IMR-90 (cell line): ENCODE measurements at regions of chr6 and their contacts with region 1.

Region 1: GRCh38 chr6:169452117-169452868 is 198.6 kb upstream of the THBS2 start:
- DNase-seq: peak; percentile 97
- ATAC-seq: peak; percentile 94
- H3K4me3 ChIP-seq: peak overlapping the region; percentile 12; the same call in 1 of the 2 replicates
- H3K27ac ChIP-seq: peak overlapping the region; percentile 93
- H3K4me1 ChIP-seq: peaks cover 21% of the 10 kb centered on the region
- H3K27me3 ChIP-seq: no peaks in the 10 kb centered on the region
- CTCF ChIP-seq: no peak
- POLR2A ChIP-seq: no peak
- RAD21 ChIP-seq: no peak; the same call in 1 of the 2 replicates

Region 2: DNA sequence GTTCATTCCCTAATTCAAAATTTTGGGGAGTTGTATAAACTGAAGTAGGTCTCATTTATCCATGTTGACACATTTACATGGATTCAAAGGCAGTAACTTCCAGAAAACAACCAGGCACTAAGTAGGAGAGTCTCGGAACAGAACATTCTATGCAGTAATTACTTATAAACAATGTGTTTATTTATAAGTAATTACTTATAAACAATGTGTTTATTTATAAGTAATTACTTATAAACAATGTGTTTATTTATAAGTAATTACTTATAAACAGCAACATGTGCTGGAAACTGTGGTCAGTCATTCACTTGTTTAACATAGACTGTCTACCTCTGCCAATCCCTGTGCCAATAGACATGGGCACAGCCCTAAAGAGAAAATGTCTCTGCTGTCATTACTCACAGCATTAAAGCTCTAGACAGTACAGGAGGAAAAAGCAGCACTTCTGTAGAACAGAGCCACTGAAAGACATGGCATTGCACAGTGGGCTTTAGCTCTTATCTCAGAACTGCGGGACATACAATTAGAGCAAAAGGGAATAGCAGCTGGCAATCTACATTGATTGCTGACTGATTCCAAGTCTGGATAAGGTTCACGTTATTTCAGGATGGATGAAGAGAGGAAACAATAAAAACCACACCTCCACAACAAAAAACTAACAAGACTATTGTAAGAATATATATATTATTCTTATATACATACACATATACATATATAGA is 61.3 kb after region 1 on chr6:
- CTCF ChIA-PET with region 1: no interaction called
- POLR2A ChIA-PET with region 1: no interaction called
- dilution Hi-C with region 1: no loop called
- in situ Hi-C with region 1: no loop called
- intact Hi-C with region 1: loop called (anchors 2 kb)
- DNase-seq: no peak
- ATAC-seq: no peak
- H3K4me3 ChIP-seq: no peak overlapping the region
- H3K27ac ChIP-seq: no peak overlapping the region
- H3K4me1 ChIP-seq: no peaks in the 10 kb centered on the region
- H3K27me3 ChIP-seq: no peaks in the 10 kb centered on the region
- CTCF ChIP-seq: no peak
- POLR2A ChIP-seq: no peak
- RAD21 ChIP-seq: no peak

Region 3: DNA sequence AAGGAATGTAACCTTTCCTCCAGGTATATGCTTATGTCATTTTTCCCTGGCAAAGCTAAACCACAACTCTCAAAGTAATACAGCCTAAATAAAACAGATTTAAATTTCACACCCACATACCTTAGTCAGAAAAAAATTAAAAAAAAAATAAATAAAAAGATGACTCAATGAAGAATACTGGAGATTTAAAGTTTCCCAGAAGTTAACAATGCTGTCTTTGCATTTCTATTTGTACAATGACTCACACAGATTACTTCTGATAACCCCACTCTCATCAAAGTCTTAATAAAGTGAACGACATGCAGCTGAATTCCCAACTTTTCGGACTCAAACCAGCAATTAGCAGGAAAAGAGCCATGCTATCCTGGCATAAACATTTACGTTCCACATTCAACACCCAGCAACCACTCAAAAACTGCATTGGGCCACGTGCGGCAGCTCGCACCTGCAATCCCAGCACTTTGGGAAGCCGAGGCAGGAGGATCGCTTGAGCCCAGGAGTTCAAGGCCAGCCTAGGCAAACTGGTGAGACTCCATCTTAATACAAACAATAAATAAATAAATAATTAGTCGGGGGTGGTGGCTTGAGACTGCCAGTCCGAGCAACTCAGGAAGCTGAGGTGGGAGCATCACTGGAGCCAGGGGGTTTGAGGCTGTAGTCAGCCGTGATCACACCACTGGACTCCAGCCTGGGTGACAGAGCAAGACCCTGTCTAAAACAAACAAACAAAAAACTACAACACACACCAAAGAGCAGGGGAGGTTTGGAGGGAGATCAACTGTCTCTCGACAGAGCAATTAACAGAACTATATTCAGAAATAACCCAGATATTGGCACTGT is 119.0 kb after region 1 on chr6:
- CTCF ChIA-PET with region 1: no interaction called
- POLR2A ChIA-PET with region 1: no interaction called
- dilution Hi-C with region 1: no loop called
- in situ Hi-C with region 1: no loop called
- intact Hi-C with region 1: no loop called
- DNase-seq: peak; percentile 74
- ATAC-seq: peak; percentile 74
- H3K4me3 ChIP-seq: no peak overlapping the region
- H3K27ac ChIP-seq: peak overlapping the region; percentile 36; the same call in 1 of the 2 replicates
- H3K4me1 ChIP-seq: peaks cover 5% of the 10 kb centered on the region
- H3K27me3 ChIP-seq: no peaks in the 10 kb centered on the region
- CTCF ChIP-seq: no peak
- POLR2A ChIP-seq: no peak
- RAD21 ChIP-seq: no peak